ENCODE measurements at regions of chr7 and their contacts with region 1.

Region 1: DNA sequence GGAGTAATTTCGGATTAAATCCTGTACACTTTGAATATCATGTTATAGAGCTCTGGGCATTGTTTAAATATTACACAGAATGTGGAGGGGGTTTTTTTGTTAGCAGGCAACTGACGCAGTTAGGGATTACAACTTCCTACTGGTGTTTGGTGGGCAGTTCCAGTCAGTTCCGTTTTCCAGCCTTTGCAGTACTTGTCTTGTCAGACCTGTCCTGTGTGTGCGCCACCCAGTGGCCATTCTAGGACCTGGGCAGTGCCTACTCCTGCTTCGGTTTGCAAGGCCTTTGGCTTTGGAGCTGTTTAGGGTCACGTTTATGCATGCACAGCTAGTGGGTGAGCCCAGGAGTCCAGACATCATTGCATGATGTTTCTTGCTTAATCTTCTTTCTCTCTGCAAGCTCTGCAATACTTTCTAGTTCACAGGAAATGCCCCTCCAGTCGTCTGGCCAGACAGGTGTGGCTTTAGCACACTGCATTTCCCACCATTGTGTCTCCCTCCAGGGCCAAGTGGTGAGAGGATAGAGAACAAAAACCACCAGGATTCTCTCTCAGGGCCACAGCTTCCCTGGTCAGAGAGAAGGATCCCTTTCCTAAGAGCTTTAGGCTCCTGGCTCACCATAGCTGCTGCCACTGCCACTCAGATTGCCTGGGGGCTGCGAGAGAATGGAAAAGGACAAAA is 96.5 kb upstream of the TARP start:
- DNase-seq: peak; percentile 63
- CTCF ChIP-seq: peak; percentile 95

Region 2: GRCh38 chr7:37901236-37901827 is 468.6 kb before region 1 on chr7:
- CTCF ChIA-PET with region 1: interaction called, 27 read pairs
- POLR2A ChIA-PET with region 1: no interaction called
- DNase-seq: peak; percentile 30
- CTCF ChIP-seq: peak; percentile 32

Region 3: GRCh38 chr7:38107486-38107893 is 262.5 kb before region 1 on chr7:
- CTCF ChIA-PET with region 1: interaction called, 60 read pairs
- POLR2A ChIA-PET with region 1: no interaction called
- DNase-seq: peak; percentile 55
- CTCF ChIP-seq: peak; percentile 73

Region 4: GRCh38 chr7:38232502-38233366 is 137.2 kb before region 1 on chr7:
- CTCF ChIA-PET with region 1: interaction called, 13 read pairs
- POLR2A ChIA-PET with region 1: no interaction called
- DNase-seq: peak; percentile 69
- CTCF ChIP-seq: no peak

Region 5: GRCh38 chr7:38318803-38319416 is 51.0 kb before region 1 on chr7:
- CTCF ChIA-PET with region 1: interaction called, 17 read pairs
- POLR2A ChIA-PET with region 1: no interaction called
- DNase-seq: peak; percentile 68
- CTCF ChIP-seq: peak; percentile 61

Region 6: GRCh38 chr7:38382684-38383083 is 12.7 kb after region 1 on chr7:
- CTCF ChIA-PET with region 1: interaction called, 89 read pairs
- POLR2A ChIA-PET with region 1: no interaction called
- DNase-seq: no peak
- CTCF ChIP-seq: no peak

Region 7: DNA sequence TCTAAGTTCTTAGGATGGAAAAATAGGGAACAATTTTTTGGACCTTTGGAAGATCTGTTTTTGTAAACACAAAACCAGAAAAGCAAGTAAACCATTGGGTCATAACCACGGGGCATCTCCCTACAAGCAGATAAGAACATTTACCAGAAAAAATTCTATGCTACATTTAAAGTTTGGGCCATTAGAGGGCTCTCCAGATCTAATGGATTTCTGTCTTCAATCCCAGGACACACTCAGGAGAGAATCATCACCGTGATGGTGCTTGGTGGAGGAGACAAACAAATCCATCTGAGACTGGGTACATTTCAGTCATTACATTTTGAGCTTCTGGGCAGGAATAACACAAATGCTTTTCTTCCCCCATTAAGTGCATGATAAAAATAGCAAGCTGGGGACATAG is 81.9 kb after region 1 on chr7:
- CTCF ChIA-PET with region 1: no interaction called
- POLR2A ChIA-PET with region 1: no interaction called
- DNase-seq: no peak
- CTCF ChIP-seq: peak; percentile 13

Region 8: DNA sequence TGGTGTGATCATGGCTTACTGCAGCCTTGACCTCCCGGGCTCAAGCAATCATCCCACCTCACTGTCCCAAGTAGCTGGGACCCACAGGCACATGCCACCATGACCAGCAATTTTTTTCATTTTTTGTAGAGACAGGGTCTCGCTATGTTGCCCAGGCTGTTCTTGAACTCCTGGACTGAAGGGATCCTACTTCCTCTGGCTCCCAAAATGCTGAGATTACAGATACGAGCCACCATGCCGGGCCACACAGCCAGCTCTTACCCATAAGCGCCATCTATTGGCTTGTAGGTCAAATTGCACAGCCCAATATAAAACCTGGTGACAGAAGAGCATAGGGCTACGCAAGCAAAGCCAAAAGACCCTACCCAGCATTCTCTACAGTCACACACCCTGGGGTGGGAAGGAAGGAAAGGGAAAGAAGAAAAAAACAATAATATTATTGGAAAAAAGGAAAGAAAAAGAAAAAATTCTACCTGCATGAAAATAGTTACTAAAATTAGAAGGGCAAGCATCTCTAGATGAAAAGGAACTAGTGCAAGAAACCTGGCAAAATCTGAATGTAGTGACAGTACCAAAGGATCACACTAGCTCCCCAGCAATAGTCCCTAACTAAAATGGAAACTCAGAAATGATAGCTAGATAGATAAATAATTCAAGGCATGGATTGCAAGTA is 290.6 kb after region 1 on chr7:
- CTCF ChIA-PET with region 1: interaction called, 13 read pairs
- POLR2A ChIA-PET with region 1: no interaction called
- DNase-seq: peak; percentile 49
- CTCF ChIP-seq: peak; percentile 86

Measured in GM10248 (cell line).